ENCODE measurements at regions of chr6 and their contacts with region 1.

Region 1: DNA sequence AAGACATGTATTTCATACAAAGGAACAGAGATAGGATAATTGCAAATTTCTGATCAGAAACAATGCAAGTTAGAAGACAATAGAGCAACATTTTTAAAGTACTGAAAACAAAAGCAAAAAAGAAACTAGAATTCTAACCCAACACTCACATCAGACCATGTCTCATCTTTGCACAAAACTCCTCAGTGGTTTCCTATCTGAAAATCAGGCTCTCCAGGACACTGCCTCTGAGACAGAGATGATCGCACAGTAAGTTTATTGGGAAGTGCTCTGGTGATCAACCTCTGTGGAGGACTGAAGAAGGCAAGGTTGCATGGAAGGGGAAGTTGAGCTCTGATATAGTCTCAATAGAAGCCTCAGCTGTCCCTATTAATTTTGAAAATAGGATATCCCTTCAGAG is 2.3 kb upstream of the TTBK1 start:
- DNase-seq: no peak
- H3K4me3 Mint-ChIP-seq: no peak overlapping the region
- H3K27ac Mint-ChIP-seq: no peak overlapping the region
- H3K4me1 Mint-ChIP-seq: no peaks in the 10 kb centered on the region
- H3K27me3 Mint-ChIP-seq: no peaks in the 10 kb centered on the region
- CTCF ChIP-seq: no peak

Region 2: DNA sequence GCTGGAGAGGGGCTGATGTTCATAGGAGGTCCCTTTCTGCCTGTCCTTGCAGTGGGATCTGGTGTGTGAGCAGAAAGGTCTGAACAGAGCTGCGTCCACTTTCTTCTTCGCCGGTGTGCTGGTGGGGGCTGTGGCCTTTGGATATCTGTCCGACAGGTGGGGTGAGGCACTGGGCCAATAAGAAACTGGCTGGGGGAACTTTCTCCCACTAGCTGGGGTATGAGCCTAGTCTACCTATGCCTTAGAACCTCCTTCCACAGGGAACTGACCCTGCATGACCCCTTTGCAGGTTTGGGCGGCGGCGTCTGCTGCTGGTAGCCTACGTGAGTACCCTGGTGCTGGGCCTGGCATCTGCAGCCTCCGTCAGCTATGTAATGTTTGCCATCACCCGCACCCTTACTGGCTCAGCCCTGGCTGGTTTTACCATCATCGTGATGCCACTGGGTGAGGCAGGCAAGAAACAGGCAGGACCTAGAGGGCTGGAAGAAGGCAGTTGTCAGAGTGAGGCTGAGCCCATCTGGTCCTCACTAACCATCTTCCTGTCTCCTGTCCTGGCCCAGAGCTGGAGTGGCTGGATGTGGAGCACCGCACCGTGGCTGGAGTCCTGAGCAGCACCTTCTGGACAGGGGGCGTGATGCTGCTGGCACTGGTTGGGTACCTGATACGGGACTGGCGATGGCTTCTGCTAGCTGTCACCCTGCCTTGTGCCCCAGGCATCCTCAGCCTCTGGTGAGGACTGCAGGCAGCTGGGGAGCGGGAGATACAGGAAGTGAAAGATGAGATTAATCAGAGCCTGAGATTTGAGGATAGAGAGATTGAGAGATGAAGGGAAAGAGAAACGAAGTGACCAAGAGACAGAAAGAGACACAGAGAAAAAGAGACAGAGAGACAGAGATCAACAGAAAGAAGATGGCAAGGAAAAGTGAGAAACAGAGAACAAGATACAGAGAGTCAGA is 58.7 kb after region 1 on chr6:
- CTCF ChIA-PET with region 1: no interaction called
- POLR2A ChIA-PET with region 1: no interaction called
- intact Hi-C with region 1: no loop called
- DNase-seq: no peak
- H3K4me3 Mint-ChIP-seq: no peak overlapping the region
- H3K27ac Mint-ChIP-seq: no peak overlapping the region
- H3K4me1 Mint-ChIP-seq: no peaks in the 10 kb centered on the region
- H3K27me3 Mint-ChIP-seq: peaks cover 34% of the 10 kb centered on the region
- CTCF ChIP-seq: no peak

Region 3: DNA sequence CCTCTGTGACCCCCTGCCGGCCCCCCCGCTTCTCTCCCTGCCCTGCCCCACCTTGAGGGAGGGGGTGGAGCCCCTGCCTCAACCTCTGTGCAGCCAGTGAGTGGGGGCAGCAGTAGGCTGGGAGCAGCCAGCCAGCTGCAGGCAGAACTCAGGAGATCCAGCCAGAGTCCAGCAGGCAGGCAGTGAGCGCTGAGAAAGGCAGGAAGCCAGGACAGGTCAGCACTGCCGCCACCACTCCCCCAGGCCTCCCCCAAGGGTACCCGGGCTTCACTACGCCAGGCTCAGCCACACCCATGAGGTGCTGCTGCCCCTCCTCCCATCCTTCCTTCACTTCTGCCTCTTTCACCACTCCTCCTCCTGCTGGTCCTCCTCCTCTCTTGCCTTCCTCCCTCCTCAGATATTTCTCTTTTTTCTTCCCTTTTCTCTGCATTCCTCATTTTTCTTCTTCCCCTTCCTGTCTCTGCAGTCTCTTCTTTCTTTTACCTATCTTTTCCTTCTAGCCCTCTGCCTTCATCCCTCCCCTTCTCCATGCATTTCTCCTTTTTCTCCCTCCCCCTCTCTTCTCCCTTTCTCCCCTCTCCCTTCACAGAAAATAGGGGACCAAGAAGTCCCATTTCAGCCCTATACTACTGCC is 897.9 kb after region 1 on chr6:
- CTCF ChIA-PET with region 1: interaction called, 10 read pairs
- POLR2A ChIA-PET with region 1: no interaction called
- intact Hi-C with region 1: no loop called
- DNase-seq: no peak
- H3K4me3 Mint-ChIP-seq: no peak overlapping the region
- H3K27ac Mint-ChIP-seq: no peak overlapping the region
- H3K4me1 Mint-ChIP-seq: peaks cover 3% of the 10 kb centered on the region
- H3K27me3 Mint-ChIP-seq: no peaks in the 10 kb centered on the region
- CTCF ChIP-seq: no peak

Measured in MCF 10A (cell line).